ENCODE measurements at regions of chr5 and their contacts with region 1.

Region 1: DNA sequence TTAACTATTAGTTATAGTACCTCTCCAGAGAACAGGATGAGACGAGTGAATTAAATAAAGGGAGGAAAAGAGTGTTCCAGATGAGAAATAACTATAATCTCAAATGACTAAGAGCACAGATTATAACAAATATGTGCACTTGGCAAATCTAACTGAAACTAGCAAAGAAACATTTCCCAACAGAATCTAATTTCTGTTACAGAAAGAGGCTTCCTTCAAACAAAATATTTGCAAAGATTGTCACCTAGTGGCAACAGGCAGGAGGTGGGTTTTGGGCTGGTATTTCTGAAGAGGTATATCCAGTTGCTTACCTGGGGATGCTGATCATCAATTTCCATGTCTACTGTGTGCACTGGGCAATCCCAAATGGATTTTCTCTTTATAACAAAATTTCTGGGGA is 5.6 kb upstream of the SPDL1 start:
- DNase-seq: no peak

Region 2: GRCh38 chr5:168579488-168580226 is 998.3 kb before region 1 on chr5:
- intact Hi-C with region 1: loop called (anchors 10 kb)
- DNase-seq: peak; percentile 98 to 100 (median 100)